ENCODE measurements at regions of chr4 and their contacts with region 1.

Region 1: GRCh38 chr4:157121401-157121800 is 45.5 kb downstream of the GLRB start:
- DNase-seq: no peak
- H3K4me3 ChIP-seq: no peak overlapping the region
- H3K27ac ChIP-seq: no peak overlapping the region
- H3K4me1 ChIP-seq: no peaks in the 10 kb centered on the region
- H3K27me3 ChIP-seq: no peaks in the 10 kb centered on the region
- CTCF ChIP-seq: no peak
- EP300 ChIP-seq: no peak
- POLR2A ChIP-seq: no peak

Region 2: GRCh38 chr4:155984106-155984797 is 1137.1 kb before region 1 on chr4:
- in situ Hi-C with region 1: no loop called
- intact Hi-C with region 1: loop called (anchors 5 kb)
- DNase-seq: no peak
- H3K4me3 ChIP-seq: no peak overlapping the region
- H3K27ac ChIP-seq: no peak overlapping the region
- H3K4me1 ChIP-seq: peaks cover 0 to 6% (median 0%) of the 10 kb centered on the region in 4 donors
- H3K27me3 ChIP-seq: no peaks in the 10 kb centered on the region
- CTCF ChIP-seq: no peak
- EP300 ChIP-seq: no peak
- POLR2A ChIP-seq: no peak